ENCODE measurements at regions of chr19 and their contacts with region 1.

Region 1: GRCh38 chr19:50383852-50384684 is at the start of gene POLD1:
- DNase-seq: peak; percentile 100
- ATAC-seq: peak; percentile 97
- total RNA-seq, gene POLD1: 10.8 TPM

Region 2: GRCh38 chr19:50461066-50461875 is 77.2 kb after region 1 on chr19:
- intact Hi-C with region 1: no loop called
- DNase-seq: no peak
- ATAC-seq: peak; percentile 80

Region 3: DNA sequence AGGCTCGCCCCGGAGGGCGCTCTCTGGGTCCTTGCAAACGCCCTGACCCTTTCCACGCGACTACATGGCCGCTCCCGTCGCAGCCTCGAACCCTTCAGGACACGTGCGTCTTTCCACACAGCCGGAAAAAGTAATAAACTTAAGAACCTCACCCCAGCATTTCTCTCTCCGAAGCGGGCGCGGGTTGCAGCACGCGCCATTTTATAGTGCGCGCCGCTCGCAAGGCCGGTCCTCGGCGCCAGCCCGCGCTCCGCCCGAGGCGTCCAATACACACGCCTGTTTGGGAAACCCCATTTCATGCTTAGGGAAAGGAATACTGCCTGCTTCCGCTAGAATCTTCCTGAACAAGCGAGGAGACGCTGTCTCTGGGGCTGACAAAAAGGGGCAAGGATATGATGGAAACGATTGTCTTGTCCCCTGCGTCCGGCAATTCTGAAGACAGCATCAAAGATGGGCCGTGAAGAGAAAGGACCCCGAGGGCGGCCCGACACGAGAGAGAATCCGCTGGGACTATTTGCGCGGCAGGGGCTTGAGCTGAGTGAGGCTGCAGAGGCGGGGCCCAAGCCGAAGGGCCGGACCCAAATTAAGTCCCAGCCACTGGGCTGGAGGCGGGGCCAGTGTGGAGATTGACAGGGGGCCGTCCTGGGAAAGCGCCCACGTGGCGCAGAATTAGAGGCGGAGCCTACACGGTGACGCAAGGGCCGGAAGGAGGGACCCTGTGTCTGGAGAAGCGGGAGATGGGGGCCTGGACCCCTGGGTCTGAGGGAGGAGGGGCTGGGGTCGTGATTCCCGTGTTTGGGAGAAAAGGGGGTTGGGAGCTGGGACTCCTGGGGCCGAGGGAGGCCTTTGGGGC is 420.6 kb after region 1 on chr19:
- intact Hi-C with region 1: loop called (anchors 5 kb)
- DNase-seq: peak; percentile 99
- ATAC-seq: peak; percentile 99